ENCODE measurements at regions of chr5 and their contacts with region 1.

Region 1: GRCh38 chr5:140255460-140256157 is 47.3 kb downstream of the PFDN1 start:
- DNase-seq: no peak
- ATAC-seq: no peak
- H3K4me3 ChIP-seq: no peak overlapping the region
- H3K4me3 Mint-ChIP-seq: no peak overlapping the region
- H3K27ac ChIP-seq: no peak overlapping the region
- H3K27ac Mint-ChIP-seq: no peak overlapping the region
- H3K4me1 ChIP-seq: peaks cover 19 to 30% of the 10 kb centered on the region in 2 experiments
- H3K4me1 Mint-ChIP-seq: peaks cover 28 to 61% (median 47%) of the 10 kb centered on the region in 3 donors
- H3K27me3 ChIP-seq: no peaks in the 10 kb centered on the region
- H3K27me3 Mint-ChIP-seq: no peaks in the 10 kb centered on the region

Region 2: GRCh38 chr5:140189977-140190871 is 65.4 kb before region 1 on chr5:
- CTCF ChIA-PET with region 1: no interaction called
- POLR2A ChIA-PET with region 1: interaction called in 1 of 2 experiments, 11 read pairs
- DNase-seq: no peak
- ATAC-seq: no peak
- H3K4me3 ChIP-seq: no peak overlapping the region
- H3K4me3 Mint-ChIP-seq: no peak overlapping the region
- H3K27ac ChIP-seq: no peak overlapping the region
- H3K27ac Mint-ChIP-seq: no peak overlapping the region
- H3K4me1 ChIP-seq: no peaks in the 10 kb centered on the region
- H3K4me1 Mint-ChIP-seq: no peaks in the 10 kb centered on the region
- H3K27me3 ChIP-seq: no peaks in the 10 kb centered on the region
- H3K27me3 Mint-ChIP-seq: no peaks in the 10 kb centered on the region

Region 3: DNA sequence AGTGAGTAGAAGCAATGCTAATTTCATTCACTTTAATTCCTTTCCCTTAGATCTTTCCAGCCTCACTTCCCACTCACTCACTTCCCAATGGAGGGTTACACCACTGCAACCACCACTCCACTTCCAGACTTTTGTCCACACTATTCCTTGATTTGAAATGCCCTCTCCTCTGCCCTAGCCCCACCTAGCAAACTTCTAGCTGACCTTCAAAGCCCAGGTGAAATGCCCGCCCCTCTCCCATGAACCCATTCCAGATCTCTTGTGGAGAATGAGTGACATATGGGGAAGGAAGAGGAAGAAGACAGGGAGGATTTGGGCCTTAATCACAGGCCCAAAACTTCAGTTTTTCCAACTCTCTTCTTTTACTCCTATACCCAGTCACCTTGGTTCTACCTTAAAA is 10.2 kb after region 1 on chr5:
- CTCF ChIA-PET with region 1: no interaction called
- POLR2A ChIA-PET with region 1: interaction called in 1 of 2 experiments, 15 read pairs
- DNase-seq: no peak
- ATAC-seq: no peak
- H3K4me3 ChIP-seq: no peak overlapping the region
- H3K4me3 Mint-ChIP-seq: peak overlapping the region in 1 of 3 donors; percentile 63
- H3K27ac ChIP-seq: no peak overlapping the region
- H3K27ac Mint-ChIP-seq: peak overlapping the region; percentile 72 to 78
- H3K4me1 ChIP-seq: peaks cover 14 to 20% of the 10 kb centered on the region in 2 experiments
- H3K4me1 Mint-ChIP-seq: peaks cover 41 to 58% (median 42%) of the 10 kb centered on the region in 3 donors
- H3K27me3 ChIP-seq: no peaks in the 10 kb centered on the region
- H3K27me3 Mint-ChIP-seq: no peaks in the 10 kb centered on the region

Region 4: GRCh38 chr5:140351609-140352334 is 96.2 kb after region 1 on chr5:
- CTCF ChIA-PET with region 1: interaction called, 10 to 12 read pairs
- POLR2A ChIA-PET with region 1: no interaction called
- DNase-seq: peak in 28 of 35 experiments; percentile 9 to 87 (median 41)
- ATAC-seq: peak; percentile 82 to 93 (median 84)
- H3K4me3 ChIP-seq: no peak overlapping the region
- H3K4me3 Mint-ChIP-seq: no peak overlapping the region
- H3K27ac ChIP-seq: no peak overlapping the region
- H3K27ac Mint-ChIP-seq: no peak overlapping the region
- H3K4me1 ChIP-seq: peaks cover 6% of the 10 kb centered on the region in 2 experiments
- H3K4me1 Mint-ChIP-seq: peaks cover 12 to 15% (median 12%) of the 10 kb centered on the region in 3 donors
- H3K27me3 ChIP-seq: peaks cover 0 to 20% of the 10 kb centered on the region in 2 experiments
- H3K27me3 Mint-ChIP-seq: peaks cover 0 to 11% of the 10 kb centered on the region in 2 donors

Region 5: GRCh38 chr5:140357726-140358093 is 102.1 kb after region 1 on chr5:
- CTCF ChIA-PET with region 1: interaction called, 4 to 10 read pairs
- POLR2A ChIA-PET with region 1: no interaction called
- DNase-seq: peak in 34 of 35 experiments; percentile 40 to 84 (median 62)
- ATAC-seq: peak; percentile 90 to 96 (median 94)
- H3K4me3 ChIP-seq: no peak overlapping the region
- H3K4me3 Mint-ChIP-seq: peak overlapping the region; percentile 54 to 67 (median 62)
- H3K27ac ChIP-seq: no peak overlapping the region
- H3K27ac Mint-ChIP-seq: peak overlapping the region in 1 of 2 donors; percentile 72
- H3K4me1 ChIP-seq: peaks cover 0 to 12% of the 10 kb centered on the region in 2 experiments
- H3K4me1 Mint-ChIP-seq: peaks cover 8 to 10% (median 8%) of the 10 kb centered on the region in 3 donors
- H3K27me3 ChIP-seq: peaks cover 0 to 4% of the 10 kb centered on the region in 2 experiments
- H3K27me3 Mint-ChIP-seq: peaks cover 3 to 7% of the 10 kb centered on the region in 2 donors